SK-N-SH (cell line): ENCODE measurements at regions of chr17 and their contacts with region 1.

Region 1: DNA sequence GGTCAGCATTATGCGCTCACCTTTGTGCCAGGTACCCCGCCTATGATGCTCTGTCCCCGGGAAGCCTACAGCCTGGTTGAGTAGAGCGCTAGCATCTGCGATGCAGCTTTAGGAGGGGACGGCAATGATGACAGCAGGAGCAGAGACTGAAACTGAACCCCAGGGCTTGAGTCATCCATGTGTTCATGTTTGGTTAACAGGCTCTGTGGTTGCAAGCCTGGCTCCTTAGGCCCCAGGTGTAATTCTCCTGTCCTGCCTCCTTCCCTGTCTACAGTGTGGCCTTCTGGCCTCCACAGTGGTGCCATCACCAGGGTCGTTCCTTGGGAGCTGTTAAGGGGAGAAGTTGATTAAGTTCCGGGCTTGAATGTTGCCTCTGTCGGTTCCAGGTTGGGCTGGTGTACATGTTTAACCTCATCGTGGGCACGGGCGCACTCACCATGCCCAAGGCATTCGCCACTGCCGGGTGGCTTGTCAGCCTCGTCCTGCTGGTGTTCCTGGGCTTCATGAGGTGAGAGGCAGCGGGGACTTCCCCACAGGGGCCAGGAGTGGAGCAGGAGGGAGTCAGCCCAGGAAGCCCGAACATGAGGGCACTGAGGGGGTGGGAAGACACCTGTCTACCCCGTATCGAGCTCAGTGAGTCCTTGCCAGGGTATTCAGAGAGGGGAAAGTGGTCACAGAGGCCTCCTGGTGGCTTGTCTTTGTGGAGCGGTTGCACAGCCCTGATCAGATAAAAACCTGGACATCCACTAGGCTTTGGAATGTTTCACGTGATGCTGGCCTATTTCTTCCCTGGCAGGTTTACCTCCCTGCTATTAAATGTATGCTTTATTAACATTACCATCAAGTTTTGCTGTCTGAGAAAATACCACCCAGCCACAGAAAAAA is 9.2 kb upstream of the NAT9 start:
- DNase-seq: no peak
- H3K4me3 ChIP-seq: no peak overlapping the region
- H3K27ac ChIP-seq: no peak overlapping the region
- H3K4me1 ChIP-seq: no peaks in the 10 kb centered on the region
- H3K27me3 ChIP-seq: no peaks in the 10 kb centered on the region
- CTCF ChIP-seq: no peak
- EP300 ChIP-seq: no peak
- RAD21 ChIP-seq: no peak

Region 2: GRCh38 chr17:74729368-74729767 is 56.0 kb before region 1 on chr17:
- CTCF ChIA-PET with region 1: no interaction called
- POLR2A ChIA-PET with region 1: no interaction called
- DNase-seq: no peak
- H3K4me3 ChIP-seq: no peak overlapping the region
- H3K27ac ChIP-seq: no peak overlapping the region
- H3K4me1 ChIP-seq: no peaks in the 10 kb centered on the region
- H3K27me3 ChIP-seq: peaks cover 4% of the 10 kb centered on the region; the same call in 1 of the 2 replicates
- CTCF ChIP-seq: no peak
- EP300 ChIP-seq: no peak
- RAD21 ChIP-seq: no peak

Region 3: DNA sequence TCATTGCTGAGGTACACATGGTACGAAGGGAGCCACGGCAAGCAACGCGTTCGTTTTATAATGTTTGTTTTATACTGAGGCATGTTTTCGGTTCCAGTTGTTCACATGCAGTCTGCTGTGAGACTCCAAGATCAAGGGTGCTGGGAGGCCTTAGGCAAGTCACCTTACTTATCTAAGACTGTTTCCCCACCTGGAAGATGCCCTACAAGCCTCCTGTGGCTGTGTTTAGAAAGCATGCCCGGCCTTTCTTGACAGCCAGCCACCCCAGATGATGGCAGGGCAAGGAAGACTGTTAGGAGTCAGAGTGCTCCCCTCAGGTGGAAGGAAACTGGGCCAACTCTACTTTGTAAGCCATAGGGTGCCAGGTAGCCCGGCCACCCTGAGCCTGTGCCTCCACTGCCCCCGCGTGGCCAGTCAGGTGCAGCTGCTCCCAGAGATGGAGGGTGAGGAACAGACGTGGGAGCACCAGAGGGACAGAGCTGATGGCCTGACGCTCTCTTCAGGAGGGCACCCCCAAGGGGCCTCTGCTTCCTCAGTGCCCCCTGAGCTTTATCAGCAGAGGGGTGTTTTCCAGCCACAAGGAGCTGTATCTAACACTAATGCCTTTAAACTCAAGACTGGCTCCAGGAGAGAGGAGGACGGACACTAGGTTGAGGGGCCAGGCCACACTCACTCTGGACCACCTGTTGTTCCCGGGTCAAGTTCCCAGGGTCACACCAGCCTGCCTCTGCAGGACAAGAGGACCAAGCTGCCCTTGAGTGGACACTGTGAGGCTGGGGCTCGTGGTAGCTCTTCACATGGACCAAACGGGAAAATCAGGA is 14.6 kb before region 1 on chr17:
- CTCF ChIA-PET with region 1: interaction called, 197 read pairs
- POLR2A ChIA-PET with region 1: no interaction called
- DNase-seq: peak; percentile 91
- H3K4me3 ChIP-seq: no peak overlapping the region
- H3K27ac ChIP-seq: no peak overlapping the region
- H3K4me1 ChIP-seq: peaks cover 23 to 29% of the 10 kb centered on the region in 2 experiments; a peak in 3 of 4 replicates
- H3K27me3 ChIP-seq: no peaks in the 10 kb centered on the region
- CTCF ChIP-seq: peak; percentile 85
- EP300 ChIP-seq: no peak
- RAD21 ChIP-seq: peak; percentile 98

Region 4: GRCh38 chr17:74815550-74816370 is 30.4 kb after region 1 on chr17:
- CTCF ChIA-PET with region 1: interaction called, 453 read pairs
- POLR2A ChIA-PET with region 1: no interaction called
- DNase-seq: no peak
- H3K4me3 ChIP-seq: no peak overlapping the region
- H3K27ac ChIP-seq: no peak overlapping the region
- H3K4me1 ChIP-seq: no peaks in the 10 kb centered on the region; a peak in 1 of 4 replicates
- H3K27me3 ChIP-seq: no peaks in the 10 kb centered on the region
- CTCF ChIP-seq: peak; percentile 47
- EP300 ChIP-seq: no peak
- RAD21 ChIP-seq: no peak